Activated naive CD4-positive, alpha-beta T cell treated with anti-CD3 and anti-CD28 coated beads for 36 hours (primary cell): ENCODE measurements at regions of chr2 and their contacts with region 1.

Region 1: DNA sequence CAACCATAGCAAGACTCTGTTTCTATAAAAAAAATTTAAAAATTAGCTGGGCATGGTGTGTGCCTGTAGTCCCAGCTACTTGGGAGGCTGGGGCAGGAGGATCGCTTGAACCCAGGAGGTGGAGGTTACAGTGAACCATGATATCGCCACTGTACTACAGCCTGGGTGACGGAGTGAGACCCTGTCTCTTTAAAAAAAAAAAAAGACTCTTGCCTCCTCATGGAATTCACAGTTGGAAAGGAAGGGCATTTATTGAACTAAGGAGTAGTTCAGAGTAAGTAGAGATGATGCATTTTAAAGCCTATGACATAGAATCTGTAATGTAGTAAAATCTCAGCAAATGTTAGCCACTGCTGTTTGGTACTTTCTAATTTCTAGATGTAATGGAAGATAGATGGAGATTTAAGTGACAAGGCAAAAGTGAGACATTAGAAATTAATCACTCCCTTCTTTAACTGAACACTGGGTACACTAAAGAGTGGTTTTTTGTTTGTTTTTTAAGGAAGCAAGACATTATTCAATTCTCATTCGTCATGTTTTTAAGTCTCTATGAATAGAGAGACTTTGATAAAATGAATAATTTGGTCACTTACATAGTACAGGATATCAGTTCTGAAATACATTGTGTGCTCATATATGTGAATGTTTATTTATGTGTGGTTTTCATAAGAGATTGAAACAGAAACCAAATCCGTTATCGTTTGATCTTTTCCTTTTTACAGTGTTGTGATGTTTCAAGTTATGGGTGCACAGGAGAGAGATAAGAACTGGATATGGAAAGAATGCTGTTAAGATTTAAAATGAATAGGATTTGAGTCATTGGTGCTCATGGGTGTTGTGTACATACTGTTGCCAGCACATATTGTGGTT is 186.1 kb upstream of the STON1 start:
- DNase-seq: no peak
- H3K4me3 Mint-ChIP-seq: peak overlapping the region; percentile 8
- H3K27ac Mint-ChIP-seq: peak overlapping the region; percentile 47
- H3K4me1 Mint-ChIP-seq: peaks cover 37% of the 10 kb centered on the region
- H3K27me3 Mint-ChIP-seq: no peaks in the 10 kb centered on the region

Region 2: GRCh38 chr2:48045613-48046012 is 298.2 kb before region 1 on chr2:
- CTCF ChIA-PET with region 1: no interaction called
- intact Hi-C with region 1: no loop called
- DNase-seq: no peak
- H3K4me3 Mint-ChIP-seq: no peak overlapping the region
- H3K27ac Mint-ChIP-seq: no peak overlapping the region
- H3K4me1 Mint-ChIP-seq: no peaks in the 10 kb centered on the region
- H3K27me3 Mint-ChIP-seq: no peaks in the 10 kb centered on the region

Region 3: DNA sequence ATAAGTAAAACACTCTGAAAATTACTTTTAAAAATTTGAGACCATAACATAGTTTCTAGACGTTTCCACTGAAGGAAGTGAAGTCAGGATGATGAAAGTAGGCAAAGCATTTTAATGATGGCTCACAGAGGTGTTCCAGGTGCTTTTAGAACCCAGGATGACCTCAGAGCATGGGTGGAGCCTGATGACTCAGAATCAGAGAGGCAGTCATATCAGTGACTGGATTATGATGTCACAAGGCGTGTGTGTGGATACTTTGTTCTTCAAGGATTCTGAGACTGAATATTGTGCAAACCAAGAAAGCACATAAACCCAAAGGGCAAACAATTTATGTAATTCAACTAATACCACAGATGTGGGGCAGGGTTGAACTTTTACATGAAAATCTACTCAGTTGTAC is 229.6 kb before region 1 on chr2:
- CTCF ChIA-PET with region 1: no interaction called
- intact Hi-C with region 1: loop called (anchors 1 kb)
- DNase-seq: peak; percentile 88
- H3K4me3 Mint-ChIP-seq: no peak overlapping the region
- H3K27ac Mint-ChIP-seq: no peak overlapping the region
- H3K4me1 Mint-ChIP-seq: peaks cover 29% of the 10 kb centered on the region
- H3K27me3 Mint-ChIP-seq: no peaks in the 10 kb centered on the region

Region 4: GRCh38 chr2:48332286-48332685 is 11.5 kb before region 1 on chr2:
- CTCF ChIA-PET with region 1: no interaction called
- intact Hi-C with region 1: loop called (anchors 1 kb)
- DNase-seq: no peak
- H3K4me3 Mint-ChIP-seq: no peak overlapping the region
- H3K27ac Mint-ChIP-seq: no peak overlapping the region
- H3K4me1 Mint-ChIP-seq: peaks cover 40% of the 10 kb centered on the region
- H3K27me3 Mint-ChIP-seq: no peaks in the 10 kb centered on the region

Region 5: GRCh38 chr2:48356701-48357325 is 13.0 kb after region 1 on chr2:
- CTCF ChIA-PET with region 1: interaction called, 3 read pairs
- intact Hi-C with region 1: loop called (anchors 1 kb)
- DNase-seq: peak; percentile 40
- H3K4me3 Mint-ChIP-seq: peak overlapping the region; percentile 54
- H3K27ac Mint-ChIP-seq: peak overlapping the region; percentile 87
- H3K4me1 Mint-ChIP-seq: peaks cover 55% of the 10 kb centered on the region
- H3K27me3 Mint-ChIP-seq: no peaks in the 10 kb centered on the region

Region 6: GRCh38 chr2:48397846-48398245 is 54.0 kb after region 1 on chr2:
- CTCF ChIA-PET with region 1: no interaction called
- intact Hi-C with region 1: loop called (anchors 2 kb)
- DNase-seq: no peak
- H3K4me3 Mint-ChIP-seq: no peak overlapping the region
- H3K27ac Mint-ChIP-seq: peak overlapping the region; percentile 26
- H3K4me1 Mint-ChIP-seq: peaks cover 9% of the 10 kb centered on the region
- H3K27me3 Mint-ChIP-seq: no peaks in the 10 kb centered on the region

Region 7: DNA sequence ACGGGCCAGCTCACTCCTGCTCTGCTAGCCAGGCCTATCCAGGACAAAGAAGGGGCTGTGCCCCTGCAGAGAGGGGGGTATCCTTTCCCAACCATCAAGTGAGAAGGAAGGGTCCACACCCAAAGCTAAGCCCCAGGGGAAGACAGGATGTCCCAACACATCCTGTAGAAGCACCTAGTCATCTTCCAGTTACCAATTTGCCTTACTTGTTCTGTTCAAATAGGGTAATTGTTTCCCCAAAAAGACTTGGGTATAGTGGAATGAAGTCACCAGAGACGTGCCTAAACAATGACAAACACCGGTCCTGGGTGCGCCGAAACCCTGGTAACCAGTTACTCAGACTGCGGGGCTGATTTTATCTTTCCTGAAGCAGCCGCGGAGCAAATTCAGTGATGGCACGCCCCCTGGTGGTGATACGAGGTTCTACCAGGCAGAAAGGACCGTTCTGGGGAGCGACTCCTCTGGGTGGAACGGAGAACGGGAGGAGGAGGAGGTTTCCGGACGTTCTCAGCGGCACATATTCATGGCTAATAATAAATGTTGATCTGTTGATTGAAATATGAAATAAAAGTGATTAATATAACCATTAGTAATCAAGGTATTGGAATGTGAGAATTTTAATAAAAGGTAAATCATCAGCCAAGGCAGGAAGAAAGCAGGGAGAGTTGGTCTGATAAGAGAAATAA is 76.8 kb after region 1 on chr2:
- CTCF ChIA-PET with region 1: no interaction called
- intact Hi-C with region 1: loop called (anchors 1 kb)
- DNase-seq: peak; percentile 97
- H3K4me3 Mint-ChIP-seq: no peak overlapping the region
- H3K27ac Mint-ChIP-seq: peak overlapping the region; percentile 7
- H3K4me1 Mint-ChIP-seq: peaks cover 21% of the 10 kb centered on the region
- H3K27me3 Mint-ChIP-seq: no peaks in the 10 kb centered on the region